GM12878 (cell line): ENCODE measurements at regions of chr5 and their contacts with region 1.

Region 1: DNA sequence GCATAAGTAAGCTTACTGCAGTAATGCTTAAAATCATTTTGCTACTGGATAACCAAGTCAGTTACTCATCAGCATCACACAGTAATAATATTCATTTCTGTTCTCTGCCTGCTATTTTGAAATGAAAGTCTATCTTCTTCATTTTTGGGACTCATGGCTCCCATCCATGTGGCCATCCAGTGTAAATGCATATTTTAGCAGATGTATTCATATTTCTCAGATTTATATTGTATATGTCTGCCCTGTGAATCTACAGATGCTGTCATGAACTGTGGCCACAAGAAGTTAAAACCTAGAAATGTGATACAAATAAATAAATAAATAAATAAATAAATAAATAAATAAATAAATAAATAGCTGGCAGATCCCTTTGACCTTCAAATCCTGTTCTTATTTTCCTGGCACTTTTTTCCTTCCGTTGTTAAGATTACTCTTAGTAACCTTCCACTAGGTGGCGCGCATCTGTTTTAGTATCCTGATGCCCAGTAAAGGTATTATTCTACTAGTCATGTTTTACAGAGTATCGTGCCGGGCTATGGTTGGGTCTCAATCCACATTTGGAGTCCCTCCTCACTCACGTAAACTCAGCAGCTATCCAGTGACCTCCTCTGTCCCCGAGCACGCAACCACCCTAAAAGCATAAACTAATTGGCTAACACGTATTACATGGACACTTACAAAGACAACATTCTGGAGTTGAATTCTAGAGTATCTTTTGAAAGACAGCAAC is 79.2 kb upstream of the IL7R start:
- DNase-seq: no peak
- ATAC-seq: peak; percentile 90
- H3K4me3 ChIP-seq: no peak overlapping the region
- H3K27ac ChIP-seq: no peak overlapping the region
- H3K4me1 ChIP-seq: no peaks in the 10 kb centered on the region
- H3K27me3 ChIP-seq: no peaks in the 10 kb centered on the region
- CTCF ChIP-seq: peak; percentile 53 to 67 (median 56); a peak in 5 of 6 replicates
- EP300 ChIP-seq: no peak
- POLR2A ChIP-seq: no peak
- RAD21 ChIP-seq: peak; percentile 88

Region 2: DNA sequence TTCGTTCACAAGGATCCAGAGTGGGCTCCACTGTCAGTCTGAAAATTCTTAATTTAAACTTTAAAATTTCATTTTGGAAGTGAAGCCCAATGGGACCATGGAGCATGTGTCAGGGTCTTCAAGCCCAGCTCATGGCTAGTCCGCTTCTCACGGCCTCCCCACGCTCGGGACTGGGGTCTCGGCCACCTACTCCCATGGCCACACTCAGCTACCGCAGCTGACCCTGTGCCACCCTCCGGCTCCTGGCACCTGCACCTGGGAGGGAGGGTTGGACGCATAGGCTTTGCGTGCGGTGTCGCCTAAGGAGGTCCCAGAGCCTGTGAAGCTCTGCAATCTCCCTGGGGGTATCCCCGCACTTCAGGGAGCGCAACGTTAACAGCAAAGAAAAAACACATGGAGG is 371.6 kb before region 1 on chr5:
- CTCF ChIA-PET with region 1: no interaction called
- POLR2A ChIA-PET with region 1: no interaction called
- RAD21 ChIA-PET with region 1: no interaction called
- SMC1A ChIA-PET with region 1: no interaction called
- in situ Hi-C with region 1: no loop called
- intact Hi-C with region 1: no loop called
- DNase-seq: no peak
- ATAC-seq: no peak
- H3K4me3 ChIP-seq: no peak overlapping the region
- H3K27ac ChIP-seq: no peak overlapping the region
- H3K4me1 ChIP-seq: no peaks in the 10 kb centered on the region
- H3K27me3 ChIP-seq: no peaks in the 10 kb centered on the region
- CTCF ChIP-seq: no peak
- EP300 ChIP-seq: no peak
- POLR2A ChIP-seq: no peak
- RAD21 ChIP-seq: no peak

Region 3: GRCh38 chr5:35651002-35651756 is 126.3 kb before region 1 on chr5:
- CTCF ChIA-PET with region 1: interaction called, 32 read pairs
- POLR2A ChIA-PET with region 1: no interaction called
- RAD21 ChIA-PET with region 1: interaction called, 12 read pairs
- SMC1A ChIA-PET with region 1: interaction called, 27 read pairs
- in situ Hi-C with region 1: no loop called
- intact Hi-C with region 1: loop called (anchors 2 kb)
- DNase-seq: no peak
- ATAC-seq: peak; percentile 98
- H3K4me3 ChIP-seq: no peak overlapping the region
- H3K27ac ChIP-seq: no peak overlapping the region
- H3K4me1 ChIP-seq: no peaks in the 10 kb centered on the region
- H3K27me3 ChIP-seq: no peaks in the 10 kb centered on the region
- CTCF ChIP-seq: peak; percentile 45 to 57 (median 57); a peak in 4 of 6 replicates
- EP300 ChIP-seq: no peak
- POLR2A ChIP-seq: no peak
- RAD21 ChIP-seq: peak; percentile 56

Region 4: DNA sequence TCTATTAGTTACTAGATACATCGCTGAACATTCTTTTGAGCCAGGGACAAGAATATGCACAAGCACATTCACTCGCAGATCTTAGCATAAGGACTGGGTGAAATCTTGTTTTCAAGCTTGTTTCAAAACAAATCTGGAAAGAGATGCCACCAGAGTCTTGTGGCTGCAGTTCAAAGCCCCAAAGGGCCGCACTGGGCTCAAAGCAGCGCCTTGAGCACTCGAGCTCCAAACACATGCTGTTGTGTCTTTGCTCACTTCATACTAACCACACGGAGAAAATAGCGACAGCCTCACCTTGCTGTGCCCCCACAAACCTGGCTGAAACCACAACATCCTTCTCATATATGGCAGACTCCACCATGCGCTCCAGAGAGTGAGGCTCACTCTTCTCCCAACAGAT is 45.0 kb after region 1 on chr5:
- CTCF ChIA-PET with region 1: interaction called, 21 read pairs
- POLR2A ChIA-PET with region 1: no interaction called
- RAD21 ChIA-PET with region 1: interaction called, 4 read pairs
- SMC1A ChIA-PET with region 1: interaction called, 6 read pairs
- in situ Hi-C with region 1: no loop called
- intact Hi-C with region 1: no loop called
- DNase-seq: no peak
- ATAC-seq: no peak; the same call in 2 of the 3 replicates
- H3K4me3 ChIP-seq: no peak overlapping the region
- H3K27ac ChIP-seq: no peak overlapping the region
- H3K4me1 ChIP-seq: no peaks in the 10 kb centered on the region
- H3K27me3 ChIP-seq: no peaks in the 10 kb centered on the region
- CTCF ChIP-seq: no peak
- EP300 ChIP-seq: no peak
- POLR2A ChIP-seq: no peak
- RAD21 ChIP-seq: no peak

Region 5: GRCh38 chr5:35884115-35884788 is 106.7 kb after region 1 on chr5:
- CTCF ChIA-PET with region 1: interaction called, 19 read pairs
- POLR2A ChIA-PET with region 1: no interaction called
- RAD21 ChIA-PET with region 1: interaction called, 3 read pairs
- SMC1A ChIA-PET with region 1: interaction called, 4 read pairs
- in situ Hi-C with region 1: no loop called
- intact Hi-C with region 1: no loop called
- DNase-seq: no peak
- ATAC-seq: peak; percentile 91
- H3K4me3 ChIP-seq: no peak overlapping the region
- H3K27ac ChIP-seq: no peak overlapping the region
- H3K4me1 ChIP-seq: peaks cover 3% of the 10 kb centered on the region; the same call in 1 of the 2 replicates
- H3K27me3 ChIP-seq: no peaks in the 10 kb centered on the region
- CTCF ChIP-seq: no peak
- EP300 ChIP-seq: 0 out of 4 replicates have a peak, but pooled peaks of 1 of the 2 experiments have one; percentile 45
- POLR2A ChIP-seq: no peak
- RAD21 ChIP-seq: no peak